Cardiac septum (tissue), 1 donor: ENCODE measurements at regions of chr4 and their contacts with region 1.

Region 1: GRCh38 chr4:19580095-19580494 is 671.6 kb upstream of the SLIT2 start:
- DNase-seq: no peak

Region 2: GRCh38 chr4:19748519-19749479 is 168.7 kb after region 1 on chr4:
- intact Hi-C with region 1: loop called (anchors 2 kb)
- DNase-seq: no peak